Cardiac septum (tissue), 1 donor: ENCODE measurements at regions of chr18 and their contacts with region 1.

Region 1: GRCh38 chr18:55861266-55861665 is 273.3 kb upstream of the TCF4 start:
- DNase-seq: no peak

Region 2: DNA sequence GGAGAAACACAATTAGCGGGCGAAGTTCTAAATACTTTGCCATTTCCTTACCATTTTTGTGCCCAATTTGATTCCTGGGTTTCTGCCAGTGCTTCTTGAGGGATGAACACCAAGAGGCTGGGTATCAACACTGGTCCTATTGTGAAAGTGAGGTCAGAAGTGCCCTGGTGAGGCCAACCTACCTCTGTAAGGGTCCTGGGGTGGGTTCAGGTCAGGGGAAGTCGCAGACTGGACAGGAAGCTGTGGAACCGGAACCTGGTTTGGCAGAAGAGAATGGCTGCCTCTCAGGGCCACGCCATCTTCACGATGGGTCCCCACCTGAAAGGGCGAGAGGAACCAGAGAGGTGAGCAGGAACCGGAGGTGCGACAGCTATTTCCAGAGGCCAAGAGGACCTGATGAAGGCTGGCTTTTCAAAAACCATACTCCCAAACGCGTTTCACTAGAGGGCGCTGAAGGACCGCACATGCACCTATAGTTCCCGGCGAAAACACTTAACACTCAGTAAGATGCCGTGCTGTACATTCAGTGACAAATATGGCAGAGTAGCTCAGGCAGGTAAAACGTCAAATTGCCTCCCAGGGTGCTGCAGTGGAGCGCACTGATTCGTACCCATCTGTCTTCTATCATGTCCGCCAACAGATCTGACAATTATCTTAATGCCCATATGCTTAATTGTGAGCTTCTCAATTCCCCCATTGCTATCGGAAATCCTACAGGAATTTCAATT is 626.7 kb before region 1 on chr18:
- intact Hi-C with region 1: loop called (anchors 10 kb)
- DNase-seq: peak; percentile 76

Region 3: GRCh38 chr18:55343396-55344073 is 517.7 kb before region 1 on chr18:
- intact Hi-C with region 1: loop called (anchors 10 kb)
- DNase-seq: no peak

Region 4: DNA sequence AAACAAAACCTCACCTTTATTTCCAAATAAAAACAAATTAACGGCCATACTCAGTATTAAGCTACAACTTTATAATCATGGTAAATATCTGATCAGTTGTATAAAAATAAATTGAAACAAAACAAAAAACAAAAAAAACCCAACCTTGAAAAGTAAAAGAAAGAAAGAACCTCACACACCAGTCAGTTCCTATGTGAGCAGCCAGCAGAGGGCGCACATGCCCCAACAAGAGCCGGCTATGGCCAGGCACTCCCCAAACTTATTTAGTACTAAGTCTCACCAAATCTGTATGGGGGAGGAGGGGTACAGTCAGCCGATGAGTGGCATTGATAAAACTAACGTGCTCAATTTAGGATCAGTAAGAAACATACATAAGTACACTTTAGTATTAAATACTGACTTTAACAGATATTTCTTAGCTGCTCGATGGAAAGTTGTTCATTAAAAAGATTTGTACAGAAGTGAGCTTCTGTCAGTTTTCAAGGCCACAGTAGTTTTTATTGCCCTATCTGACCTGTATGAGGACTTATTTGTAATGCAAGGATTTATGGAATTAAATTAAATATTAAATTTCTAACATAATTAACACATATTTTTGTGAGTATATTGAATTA is 445.9 kb before region 1 on chr18:
- intact Hi-C with region 1: loop called (anchors 10 kb)
- DNase-seq: peak; percentile 89

Region 5: DNA sequence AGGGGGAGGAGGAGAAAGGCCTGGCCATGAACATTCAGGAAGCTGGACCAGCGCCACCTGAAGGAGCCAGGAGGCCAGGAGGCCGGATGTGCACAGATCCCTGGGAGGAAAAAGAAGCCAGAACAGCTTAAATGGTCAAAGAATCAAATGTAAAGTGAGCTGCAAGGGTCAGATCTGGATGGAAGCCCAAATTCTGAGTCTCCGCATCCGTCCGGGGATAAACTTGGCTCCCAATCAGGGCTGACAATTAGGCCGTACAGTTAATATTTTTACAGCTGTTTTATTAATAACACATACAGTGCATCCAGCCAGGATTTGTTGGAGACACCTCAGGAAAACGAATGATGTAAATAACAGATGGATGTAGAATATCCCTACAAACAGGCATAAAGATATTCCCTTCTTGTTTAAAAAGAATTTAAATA is 221.8 kb after region 1 on chr18:
- intact Hi-C with region 1: loop called (anchors 5 kb)
- DNase-seq: peak; percentile 78

Region 6: GRCh38 chr18:56314396-56314795 is 453.1 kb after region 1 on chr18:
- intact Hi-C with region 1: no loop called
- DNase-seq: no peak